ENCODE measurements at regions of chr1 and their contacts with region 1.

Region 1: GRCh38 chr1:159054427-159054826 is 22.1 kb downstream of the AIM2 start:
- DNase-seq: no peak

Region 2: DNA sequence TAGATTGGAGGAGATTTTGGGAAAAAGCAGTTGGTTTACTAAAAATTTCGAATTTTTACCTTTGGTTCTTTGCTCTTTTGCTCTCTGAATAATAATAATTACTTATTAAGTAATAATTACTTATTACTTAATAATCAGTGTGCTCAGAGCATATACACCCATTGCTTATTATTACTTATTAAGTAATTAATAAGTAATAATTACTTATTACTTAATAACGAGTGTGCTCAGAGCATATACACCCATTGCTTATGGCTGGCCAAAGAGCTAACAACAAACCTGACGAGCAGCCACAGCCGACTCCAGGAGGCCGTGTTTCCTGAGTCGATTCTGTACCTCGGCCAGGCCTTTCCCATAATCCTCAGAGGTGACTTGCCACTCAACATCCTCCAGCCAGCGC is 388.4 kb before region 1 on chr1:
- intact Hi-C with region 1: no loop called
- DNase-seq: no peak

Region 3: DNA sequence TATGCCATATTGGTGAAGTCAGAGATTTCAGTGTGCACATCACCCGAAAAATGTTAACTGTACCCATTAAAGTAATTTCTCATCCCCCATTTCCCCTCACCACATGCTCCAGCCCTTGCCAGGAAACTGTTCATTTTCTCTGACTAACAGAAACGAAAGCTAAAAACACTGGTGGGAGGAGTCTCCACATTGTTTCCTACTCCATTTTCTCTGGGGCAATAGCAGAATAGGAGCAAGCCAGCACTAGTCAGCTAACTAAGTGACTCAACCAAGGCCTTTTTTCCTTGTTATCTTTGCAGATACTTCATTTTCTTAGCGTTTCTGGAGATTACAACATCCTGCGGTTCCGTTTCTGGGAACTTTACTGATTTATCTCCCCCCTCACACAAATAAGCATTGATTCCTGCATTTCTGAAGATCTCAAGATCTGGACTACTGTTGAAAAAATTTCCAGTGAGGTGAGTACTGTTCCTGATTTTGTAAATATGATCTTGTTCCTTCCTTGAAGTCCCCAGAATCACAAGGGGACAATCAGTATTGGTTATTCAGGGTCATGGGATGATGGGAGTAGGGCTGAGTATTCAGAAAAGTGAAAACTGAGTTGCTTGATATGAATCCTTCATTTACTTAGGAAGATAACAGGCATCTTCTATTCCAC is 44.6 kb before region 1 on chr1 and contains the start of gene IFI16:
- intact Hi-C with region 1: loop called (anchors 5 kb)
- DNase-seq: no peak
- total RNA-seq, gene IFI16: 31.1 TPM

Measured in cardiac septum (tissue), 1 donor.